ENCODE measurements at regions of chr2 and their contacts with region 1.

Region 1: DNA sequence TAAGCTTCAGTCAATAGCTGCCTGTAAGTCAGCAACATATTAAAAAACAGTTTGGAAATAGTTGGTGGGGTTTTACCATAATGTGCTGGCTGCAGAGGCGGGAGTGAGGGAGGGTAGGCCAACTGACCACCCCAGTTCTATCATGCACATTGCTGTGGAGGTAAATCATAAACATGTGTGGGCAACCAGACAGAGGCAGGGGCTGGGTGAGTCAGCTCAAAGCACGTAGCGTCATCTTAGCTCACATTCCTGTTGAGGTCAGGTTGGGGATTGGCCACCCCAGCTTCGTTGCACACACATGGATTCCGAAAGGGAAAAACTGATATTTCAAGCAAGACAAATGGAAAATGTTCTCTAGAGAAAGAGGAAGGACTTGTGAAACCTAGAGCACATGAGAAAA is 19.5 kb downstream of the GPR45 start:
- DNase-seq: peak; percentile 96
- ATAC-seq: peak; percentile 95
- H3K4me3 ChIP-seq: no peak overlapping the region
- H3K27ac ChIP-seq: no peak overlapping the region
- H3K4me1 ChIP-seq: peaks cover 3% of the 10 kb centered on the region; the same call in 1 of the 2 replicates
- H3K27me3 ChIP-seq: no peaks in the 10 kb centered on the region
- CTCF ChIP-seq: no peak
- POLR2A ChIP-seq: no peak
- RAD21 ChIP-seq: no peak

Region 2: DNA sequence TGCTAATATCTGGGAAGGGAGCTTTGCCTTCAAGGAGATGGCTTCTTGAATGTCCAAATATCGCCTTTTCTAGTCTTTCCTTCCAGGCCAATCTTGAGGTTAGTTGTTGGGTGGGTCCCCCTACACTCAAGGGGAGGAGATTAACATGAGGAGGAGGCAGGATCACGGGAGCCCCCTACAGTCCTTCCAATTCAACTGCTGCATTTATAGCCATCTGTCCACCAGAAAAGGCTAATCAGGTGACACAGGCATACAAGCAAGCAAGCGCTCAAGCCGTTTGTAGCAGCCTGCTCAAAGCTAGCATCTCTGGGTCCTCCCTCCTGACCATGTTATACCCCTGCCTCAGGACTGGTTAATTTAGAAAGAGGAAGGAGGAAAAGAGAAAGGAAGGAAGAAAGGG is 135.6 kb before region 1 on chr2:
- CTCF ChIA-PET with region 1: no interaction called
- POLR2A ChIA-PET with region 1: no interaction called
- dilution Hi-C with region 1: no loop called
- in situ Hi-C with region 1: no loop called
- intact Hi-C with region 1: no loop called
- DNase-seq: no peak
- ATAC-seq: no peak
- H3K4me3 ChIP-seq: no peak overlapping the region
- H3K27ac ChIP-seq: no peak overlapping the region
- H3K4me1 ChIP-seq: no peaks in the 10 kb centered on the region
- H3K27me3 ChIP-seq: peaks cover 19% of the 10 kb centered on the region
- CTCF ChIP-seq: no peak
- POLR2A ChIP-seq: no peak
- RAD21 ChIP-seq: no peak

Region 3: DNA sequence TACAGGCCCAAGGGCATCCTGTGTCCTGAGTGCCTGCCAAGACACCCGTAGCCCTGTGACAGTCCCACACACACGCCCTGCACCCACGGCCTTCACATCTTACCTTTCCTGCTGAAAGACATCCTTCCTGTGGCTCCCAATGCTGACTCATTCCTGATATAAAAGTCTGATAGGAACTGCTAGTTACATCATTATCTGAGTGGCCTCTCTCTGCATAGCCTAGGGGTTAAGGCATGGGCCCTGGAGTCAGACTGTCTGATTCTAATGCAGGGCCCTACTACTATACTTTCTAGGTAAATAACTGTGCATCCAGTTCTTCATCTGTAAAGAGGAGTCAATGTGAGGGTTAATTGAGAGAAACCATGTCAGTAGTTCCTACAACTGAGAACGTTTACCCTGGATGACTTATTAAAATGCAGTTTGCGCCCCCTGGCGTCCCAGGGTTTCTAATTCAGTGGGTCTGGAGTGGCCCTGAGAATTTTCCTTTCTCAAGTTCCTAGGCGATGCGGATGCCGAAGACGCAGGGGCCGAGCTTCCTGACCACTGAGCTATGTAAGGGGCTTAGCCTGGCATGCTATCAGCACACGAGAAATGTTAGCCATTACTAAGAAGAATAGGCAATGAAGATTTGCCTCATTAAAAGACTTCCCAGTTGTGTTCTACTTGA is 25.5 kb before region 1 on chr2:
- CTCF ChIA-PET with region 1: interaction called, 3 read pairs
- POLR2A ChIA-PET with region 1: no interaction called
- dilution Hi-C with region 1: no loop called
- in situ Hi-C with region 1: no loop called
- intact Hi-C with region 1: loop called (anchors 1 kb)
- DNase-seq: peak; percentile 80
- ATAC-seq: peak; percentile 80
- H3K4me3 ChIP-seq: no peak overlapping the region
- H3K27ac ChIP-seq: no peak overlapping the region
- H3K4me1 ChIP-seq: 0 out of 2 replicates have a peak, but pooled peaks cover 1% of the 10 kb centered on the region
- H3K27me3 ChIP-seq: peaks cover 9% of the 10 kb centered on the region
- CTCF ChIP-seq: peak; percentile 82
- POLR2A ChIP-seq: no peak
- RAD21 ChIP-seq: peak; percentile 63

Region 4: GRCh38 chr2:105294844-105295481 is 33.9 kb after region 1 on chr2:
- CTCF ChIA-PET with region 1: no interaction called
- POLR2A ChIA-PET with region 1: no interaction called
- dilution Hi-C with region 1: no loop called
- in situ Hi-C with region 1: no loop called
- intact Hi-C with region 1: loop called (anchors 2 kb)
- DNase-seq: peak; percentile 68
- ATAC-seq: peak; percentile 94
- H3K4me3 ChIP-seq: no peak overlapping the region
- H3K27ac ChIP-seq: no peak overlapping the region
- H3K4me1 ChIP-seq: 0 out of 2 replicates have a peak, but pooled peaks cover 2% of the 10 kb centered on the region
- H3K27me3 ChIP-seq: no peaks in the 10 kb centered on the region
- CTCF ChIP-seq: peak; percentile 67
- POLR2A ChIP-seq: no peak
- RAD21 ChIP-seq: peak; percentile 68

Measured in IMR-90 (cell line).